Spleen (tissue), 13 donors: ENCODE measurements at regions of chr1 and their contacts with region 1.

Region 1: DNA sequence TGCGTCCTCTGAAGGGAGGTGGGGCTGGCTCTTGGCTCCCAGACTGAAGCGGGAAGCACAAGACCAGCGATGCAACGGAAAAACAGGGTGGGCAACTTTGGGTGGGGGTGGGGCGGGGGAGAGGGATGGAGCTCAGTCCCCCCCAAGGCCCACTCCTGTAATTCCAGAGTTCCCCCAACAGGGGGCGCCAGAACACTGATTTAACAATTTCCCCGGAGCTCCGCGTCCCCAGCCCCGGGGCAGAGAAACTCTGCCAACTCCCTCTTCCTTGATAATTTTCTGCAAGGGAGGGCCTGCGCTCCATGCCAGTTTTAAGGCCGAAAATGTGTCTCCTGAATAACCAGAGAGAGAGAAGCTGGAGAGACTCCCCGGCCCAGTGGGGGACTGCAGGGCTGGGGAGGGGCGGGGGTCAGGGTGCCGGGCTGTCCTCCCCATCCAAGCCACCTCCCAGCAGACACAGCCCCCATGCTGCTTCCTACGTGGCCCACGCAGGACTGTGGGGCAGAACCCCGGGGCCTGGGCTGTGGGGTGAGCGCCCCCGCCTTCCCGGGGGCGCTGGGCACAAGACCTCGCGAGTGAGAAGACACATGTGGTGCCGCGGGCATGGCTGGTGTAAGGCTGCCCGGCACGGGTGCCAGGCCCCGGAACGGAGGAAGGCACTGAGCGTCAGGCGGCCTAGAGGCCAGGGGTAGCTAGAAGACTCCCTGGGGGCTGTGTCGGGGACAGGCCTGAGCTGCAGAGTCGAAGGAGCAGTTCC is 51.4 kb downstream of the KIF21B start:
- DNase-seq: peak; percentile 86
- H3K4me3 ChIP-seq: no peak overlapping the region
- H3K27ac ChIP-seq: no peak overlapping the region
- H3K4me1 ChIP-seq: peaks cover 0 to 6% (median 2%) of the 10 kb centered on the region in 6 donors
- H3K27me3 ChIP-seq: no peaks in the 10 kb centered on the region
- CTCF ChIP-seq: peak; percentile 45 to 97 (median 94)
- POLR2A ChIP-seq: no peak

Region 2: GRCh38 chr1:201042779-201043461 is 70.8 kb after region 1 on chr1:
- intact Hi-C with region 1: loop called (anchors 2 kb)
- DNase-seq: peak; percentile 86
- H3K4me3 ChIP-seq: no peak overlapping the region
- H3K27ac ChIP-seq: no peak overlapping the region
- H3K4me1 ChIP-seq: peaks cover 0 to 10% (median 7%) of the 10 kb centered on the region in 6 donors
- H3K27me3 ChIP-seq: no peaks in the 10 kb centered on the region
- CTCF ChIP-seq: peak; percentile 80 to 94 (median 92)
- POLR2A ChIP-seq: no peak

Region 3: GRCh38 chr1:201114236-201115131 is 142.4 kb after region 1 on chr1:
- intact Hi-C with region 1: loop called (anchors 5 kb)
- DNase-seq: peak; percentile 89
- H3K4me3 ChIP-seq: peak overlapping the region; percentile 42 to 80 (median 54)
- H3K27ac ChIP-seq: peak overlapping the region in 5 of 8 donors; percentile 44 to 75 (median 66)
- H3K4me1 ChIP-seq: peaks cover 5 to 23% (median 13%) of the 10 kb centered on the region in 6 donors
- H3K27me3 ChIP-seq: peaks cover 0 to 41% (median 14%) of the 10 kb centered on the region in 7 donors
- CTCF ChIP-seq: peak; percentile 51 to 89 (median 84)
- POLR2A ChIP-seq: no peak